Left ventricle myocardium superior (tissue), 1 donor: ENCODE measurements at regions of chr11 and their contacts with region 1.

Region 1: DNA sequence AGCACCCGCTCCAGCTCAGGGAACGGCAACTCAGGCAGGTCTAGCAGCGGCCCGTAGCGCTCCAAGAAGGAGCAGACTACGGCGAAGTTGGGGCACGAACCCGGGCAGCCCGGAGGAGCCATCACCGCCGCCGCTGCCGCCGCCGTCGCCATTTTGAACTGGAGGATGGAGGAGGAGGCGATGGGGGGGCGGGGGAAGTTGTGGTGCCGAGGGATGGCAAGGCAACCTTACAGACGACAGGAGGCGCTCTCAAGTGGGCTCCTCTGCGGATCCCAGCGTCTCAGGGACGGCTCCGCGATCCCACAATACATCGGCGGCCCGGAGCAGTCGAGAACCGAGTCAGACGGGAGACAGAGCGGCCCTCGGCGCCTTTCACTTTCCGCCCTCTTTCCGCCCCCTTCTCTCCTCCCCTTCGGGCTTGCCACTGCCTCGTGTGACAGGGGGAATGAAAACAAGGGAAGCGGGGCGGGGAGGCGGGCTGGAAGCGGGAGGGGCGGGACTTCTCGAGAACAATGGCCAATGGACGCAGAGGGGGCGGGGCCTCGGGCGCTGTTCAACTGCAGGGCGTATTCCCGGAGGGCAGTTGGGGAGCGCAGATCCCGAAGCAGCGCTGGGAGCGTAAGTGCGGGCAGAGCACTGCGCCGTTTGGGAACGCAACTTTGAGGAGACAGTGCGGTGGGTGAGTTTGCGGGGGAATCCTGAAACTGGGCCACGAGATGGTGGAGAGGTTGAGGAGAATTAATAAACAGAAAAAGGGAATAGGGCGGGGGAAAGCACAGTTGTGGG is at the starts of genes AAMDC and RSF1:
- DNase-seq: peak; percentile 99
- ATAC-seq: peak; percentile 93
- total RNA-seq, gene AAMDC: 117 TPM
- total RNA-seq, gene RSF1: 42.7 TPM

Region 2: GRCh38 chr11:77758331-77758730 is 62.4 kb before region 1 on chr11:
- intact Hi-C with region 1: no loop called
- DNase-seq: no peak
- ATAC-seq: no peak

Region 3: DNA sequence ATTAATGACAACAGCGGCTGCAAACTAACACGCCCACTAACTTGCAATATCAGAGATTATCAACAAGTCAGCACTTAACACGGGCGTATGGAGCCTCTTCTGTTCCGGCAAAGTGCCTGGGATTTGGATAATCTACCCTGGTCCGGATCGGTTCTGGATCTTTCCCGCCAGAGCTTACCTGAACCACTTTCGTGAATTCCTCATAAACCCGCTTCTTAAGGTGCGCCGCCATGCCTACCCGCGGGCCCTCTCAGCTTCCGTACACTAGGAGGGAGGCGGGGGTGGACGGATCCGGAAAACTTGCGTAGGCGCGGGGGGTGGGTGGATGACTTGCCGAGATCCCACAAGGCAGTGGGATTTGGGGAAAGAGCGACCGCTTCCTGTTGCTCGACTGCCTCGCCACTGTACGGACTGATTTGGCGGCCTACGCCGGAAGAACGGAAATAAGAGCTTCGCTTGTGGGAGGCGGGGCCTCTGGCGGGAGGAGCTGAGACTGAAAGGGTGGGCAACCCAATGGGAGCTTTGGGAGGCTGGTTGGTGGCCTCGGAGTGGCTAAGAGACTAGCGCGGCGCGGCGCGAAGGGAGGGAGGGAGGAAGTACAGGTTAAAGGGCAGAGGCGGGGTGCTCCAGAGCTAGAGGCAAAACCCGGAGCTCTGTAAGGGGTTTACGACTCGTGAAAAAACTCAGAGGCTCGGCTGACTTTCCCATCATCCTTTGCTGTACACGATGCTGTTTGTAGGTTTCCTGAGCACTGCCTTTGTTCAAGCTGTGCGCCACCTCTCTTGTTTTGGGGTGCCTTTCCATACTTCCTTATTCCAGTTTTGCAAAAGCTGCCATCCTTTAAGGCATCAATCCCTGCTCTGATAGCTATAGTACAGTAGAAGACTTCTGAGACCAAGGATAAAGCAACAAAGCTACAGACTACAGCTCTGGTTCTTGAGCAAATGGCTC is 173.9 kb after region 1 on chr11 and contains the start of gene INTS4:
- intact Hi-C with region 1: loop called (anchors 10 kb)
- DNase-seq: peak; percentile 99
- ATAC-seq: peak; percentile 99
- total RNA-seq, gene INTS4: 14.5 TPM

Region 4: GRCh38 chr11:78061088-78061921 is 240.5 kb after region 1 on chr11:
- intact Hi-C with region 1: no loop called
- DNase-seq: peak; percentile 78
- ATAC-seq: peak; percentile 97